BJ (cell line): ENCODE measurements at regions of chr5 and their contacts with region 1.

Region 1: GRCh38 chr5:138170299-138170698 is 8.1 kb downstream of the BRD8 start:
- DNase-seq: no peak
- H3K4me3 ChIP-seq: no peak overlapping the region
- H3K27me3 ChIP-seq: no peaks in the 10 kb centered on the region
- CTCF ChIP-seq: no peak

Region 2: DNA sequence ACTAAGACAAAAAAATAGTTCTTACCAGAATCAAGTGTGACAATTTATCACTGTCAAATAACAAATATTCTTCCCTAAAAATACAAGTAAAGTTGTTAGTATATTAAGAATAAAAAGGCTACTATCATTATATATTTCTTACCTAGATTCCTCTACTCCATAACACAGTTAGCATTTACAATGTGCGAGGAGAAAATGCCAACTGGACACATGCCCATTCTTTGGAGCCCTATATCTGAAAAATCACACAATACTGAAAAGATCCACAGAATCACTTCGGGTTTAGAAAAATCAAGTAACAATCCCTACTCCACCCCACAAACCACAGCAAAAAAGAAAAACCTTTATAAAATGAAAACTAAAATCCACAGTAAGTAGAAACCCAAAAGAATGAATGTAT is 210.2 kb before region 1 on chr5:
- CTCF ChIA-PET with region 1: no interaction called
- POLR2A ChIA-PET with region 1: interaction called, 14 read pairs
- DNase-seq: no peak
- H3K4me3 ChIP-seq: no peak overlapping the region
- H3K27me3 ChIP-seq: no peaks in the 10 kb centered on the region
- CTCF ChIP-seq: no peak